Adrenal gland (tissue), 19 donors: ENCODE measurements at regions of chr5 and their contacts with region 1.

Region 1: DNA sequence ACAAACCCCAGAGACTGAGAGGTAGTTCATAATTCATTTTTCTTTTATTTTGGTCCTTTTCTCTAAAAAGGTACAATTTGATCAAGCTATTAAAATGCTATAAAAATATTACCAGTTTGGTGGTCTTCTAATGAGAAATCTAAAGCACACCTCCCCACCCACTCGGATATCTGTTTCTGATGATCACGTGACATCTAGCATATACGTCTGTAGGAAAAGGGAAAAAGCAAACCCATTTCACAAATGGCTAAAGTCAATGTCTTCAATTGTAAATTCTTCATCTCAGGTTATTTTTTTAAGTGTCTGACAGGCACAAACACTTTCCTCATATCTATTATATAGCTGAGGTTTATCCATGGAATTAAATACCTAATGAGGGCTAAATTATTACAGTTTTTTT is 18.9 kb downstream of the ZNF354A start:
- DNase-seq: no peak
- H3K4me3 ChIP-seq: peak overlapping the region in 1 of 4 donors; percentile 20
- H3K27ac ChIP-seq: no peak overlapping the region
- H3K4me1 ChIP-seq: no peaks in the 10 kb centered on the region
- H3K27me3 ChIP-seq: no peaks in the 10 kb centered on the region
- CTCF ChIP-seq: no peak
- POLR2A ChIP-seq: no peak

Region 2: GRCh38 chr5:178872302-178872701 is 160.7 kb after region 1 on chr5:
- intact Hi-C with region 1: loop called in 1 of 2 experiments (anchors 10 kb)
- DNase-seq: no peak
- H3K4me3 ChIP-seq: no peak overlapping the region
- H3K27ac ChIP-seq: no peak overlapping the region
- H3K4me1 ChIP-seq: no peaks in the 10 kb centered on the region
- H3K27me3 ChIP-seq: no peaks in the 10 kb centered on the region
- CTCF ChIP-seq: no peak
- POLR2A ChIP-seq: no peak